WTC11 (cell line): ENCODE measurements at regions of chr11 and their contacts with region 1.

Region 1: GRCh38 chr11:64652586-64653387 is 61.8 kb downstream of the SLC22A12 start:
- DNase-seq: peak; percentile 97
- ATAC-seq: peak; percentile 79
- H3K4me3 Mint-ChIP-seq: peak overlapping the region; percentile 20; the same call in 1 of the 2 replicates
- H3K27ac Mint-ChIP-seq: no peak overlapping the region
- H3K4me1 Mint-ChIP-seq: peaks cover 12% of the 10 kb centered on the region
- H3K27me3 Mint-ChIP-seq: peaks cover 14% of the 10 kb centered on the region
- CTCF ChIP-seq: peak; percentile 80

Region 2: DNA sequence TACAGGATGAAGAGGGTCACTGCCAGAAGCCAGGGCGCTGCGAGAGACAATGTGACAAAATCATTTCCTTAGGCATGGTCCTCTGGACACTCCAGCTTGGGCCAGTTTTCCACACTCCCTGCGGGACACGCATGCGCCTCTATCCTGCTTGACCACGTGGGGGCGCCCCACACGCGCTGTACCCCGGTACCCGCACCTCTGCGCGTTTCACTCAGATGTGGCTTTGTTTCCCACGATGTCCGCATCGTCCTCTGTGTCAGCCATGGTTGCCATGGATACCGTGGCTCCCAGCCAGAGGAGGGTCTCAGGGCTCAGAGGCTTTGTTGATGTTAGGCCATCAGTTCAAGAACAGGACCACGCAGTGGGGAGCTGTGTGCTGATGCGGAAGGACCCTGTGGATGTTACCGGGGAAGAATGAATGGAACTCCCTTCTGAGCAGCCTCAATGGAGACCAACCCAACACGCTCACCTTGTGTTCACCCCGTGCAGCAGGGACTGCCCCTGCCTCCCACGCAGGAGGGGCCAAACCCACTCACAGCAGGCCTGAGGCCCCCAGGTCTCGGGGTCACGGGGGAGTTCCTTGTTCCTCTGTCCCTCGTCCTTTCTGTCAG is 162.9 kb before region 1 on chr11:
- CTCF ChIA-PET with region 1: interaction called, 35 read pairs
- POLR2A ChIA-PET with region 1: no interaction called
- DNase-seq: peak; percentile 84
- ATAC-seq: peak; percentile 93
- H3K4me3 Mint-ChIP-seq: no peak overlapping the region
- H3K27ac Mint-ChIP-seq: no peak overlapping the region
- H3K4me1 Mint-ChIP-seq: 0 out of 2 replicates have a peak, but pooled peaks cover 3% of the 10 kb centered on the region
- H3K27me3 Mint-ChIP-seq: peaks cover 51% of the 10 kb centered on the region
- CTCF ChIP-seq: peak; percentile 85

Region 3: DNA sequence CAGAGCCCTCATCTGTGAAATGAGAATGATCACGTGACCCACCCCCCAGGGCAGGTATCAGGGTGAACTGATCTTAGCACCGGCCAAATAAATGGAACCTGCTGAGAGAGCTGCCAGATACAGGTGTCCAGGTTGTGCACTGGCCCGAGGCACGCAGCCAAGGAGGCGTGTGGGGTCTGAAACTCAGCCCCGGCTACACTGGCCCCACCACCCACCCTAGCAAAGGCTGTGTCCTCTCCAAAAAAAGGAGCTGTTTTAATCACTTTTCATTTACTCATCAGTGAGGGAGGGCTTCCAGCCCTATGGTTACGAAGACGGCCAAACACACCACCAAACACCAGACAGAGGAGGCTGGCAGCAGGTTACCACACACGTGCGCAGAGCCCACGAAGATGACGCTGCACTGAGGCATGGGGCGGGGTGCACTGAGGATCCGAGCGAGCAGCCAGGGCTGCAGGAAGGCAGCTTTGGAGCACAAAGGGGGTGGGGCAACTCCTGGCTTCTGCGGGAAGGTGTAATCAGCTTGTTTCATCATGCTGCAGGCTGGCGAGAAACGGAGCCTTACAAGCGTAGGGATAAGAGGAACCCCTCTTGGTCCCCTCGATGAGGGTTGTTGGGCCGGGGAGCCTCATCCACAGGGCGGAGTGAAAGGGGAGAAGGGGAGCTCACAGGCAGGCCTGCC is 81.2 kb before region 1 on chr11:
- CTCF ChIA-PET with region 1: interaction called, 97 read pairs
- POLR2A ChIA-PET with region 1: no interaction called
- DNase-seq: peak; percentile 53
- ATAC-seq: peak; percentile 63
- H3K4me3 Mint-ChIP-seq: no peak overlapping the region
- H3K27ac Mint-ChIP-seq: no peak overlapping the region
- H3K4me1 Mint-ChIP-seq: peaks cover 22% of the 10 kb centered on the region
- H3K27me3 Mint-ChIP-seq: peaks cover 19% of the 10 kb centered on the region
- CTCF ChIP-seq: no peak

Region 4: GRCh38 chr11:64638018-64638665 is 14.6 kb before region 1 on chr11:
- CTCF ChIA-PET with region 1: interaction called, 194 read pairs
- POLR2A ChIA-PET with region 1: no interaction called
- DNase-seq: peak; percentile 43
- ATAC-seq: peak; percentile 78
- H3K4me3 Mint-ChIP-seq: peak overlapping the region; percentile 72
- H3K27ac Mint-ChIP-seq: no peak overlapping the region
- H3K4me1 Mint-ChIP-seq: peaks cover 8% of the 10 kb centered on the region
- H3K27me3 Mint-ChIP-seq: peaks cover 49% of the 10 kb centered on the region
- CTCF ChIP-seq: no peak

Region 5: GRCh38 chr11:64703048-64703447 is 50.3 kb after region 1 on chr11:
- CTCF ChIA-PET with region 1: interaction called, 19 read pairs
- POLR2A ChIA-PET with region 1: interaction called, 4 read pairs
- DNase-seq: no peak
- ATAC-seq: no peak
- H3K4me3 Mint-ChIP-seq: no peak overlapping the region
- H3K27ac Mint-ChIP-seq: no peak overlapping the region
- H3K4me1 Mint-ChIP-seq: no peaks in the 10 kb centered on the region; the same call in 1 of the 2 replicates
- H3K27me3 Mint-ChIP-seq: peaks cover 35% of the 10 kb centered on the region
- CTCF ChIP-seq: no peak

Region 6: DNA sequence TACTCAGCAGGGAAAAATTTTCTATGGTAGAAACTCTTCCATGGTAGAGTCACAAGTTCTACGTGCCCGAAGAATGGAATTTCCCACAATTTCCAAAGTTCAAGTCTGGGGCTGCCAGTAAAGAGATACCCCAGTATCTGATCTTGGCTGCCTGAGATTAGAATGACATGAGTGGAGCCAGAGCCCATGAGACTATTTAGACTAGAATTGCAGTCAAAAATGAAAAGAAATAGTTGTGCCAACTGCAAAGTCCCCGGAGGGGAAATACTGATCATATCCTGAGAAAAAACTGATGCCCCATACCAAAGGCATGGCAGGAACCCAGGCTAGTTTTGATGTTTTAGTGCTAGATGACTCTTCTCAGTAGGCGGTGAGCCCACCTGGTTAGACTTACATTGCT is 307.9 kb after region 1 on chr11:
- CTCF ChIA-PET with region 1: no interaction called
- POLR2A ChIA-PET with region 1: no interaction called
- DNase-seq: no peak
- ATAC-seq: no peak
- H3K4me3 Mint-ChIP-seq: no peak overlapping the region
- H3K27ac Mint-ChIP-seq: no peak overlapping the region
- H3K4me1 Mint-ChIP-seq: no peaks in the 10 kb centered on the region
- H3K27me3 Mint-ChIP-seq: peaks cover 7% of the 10 kb centered on the region; the same call in 1 of the 2 replicates
- CTCF ChIP-seq: no peak